ENCODE measurements at regions of chr20 and their contacts with region 1.

Region 1: DNA sequence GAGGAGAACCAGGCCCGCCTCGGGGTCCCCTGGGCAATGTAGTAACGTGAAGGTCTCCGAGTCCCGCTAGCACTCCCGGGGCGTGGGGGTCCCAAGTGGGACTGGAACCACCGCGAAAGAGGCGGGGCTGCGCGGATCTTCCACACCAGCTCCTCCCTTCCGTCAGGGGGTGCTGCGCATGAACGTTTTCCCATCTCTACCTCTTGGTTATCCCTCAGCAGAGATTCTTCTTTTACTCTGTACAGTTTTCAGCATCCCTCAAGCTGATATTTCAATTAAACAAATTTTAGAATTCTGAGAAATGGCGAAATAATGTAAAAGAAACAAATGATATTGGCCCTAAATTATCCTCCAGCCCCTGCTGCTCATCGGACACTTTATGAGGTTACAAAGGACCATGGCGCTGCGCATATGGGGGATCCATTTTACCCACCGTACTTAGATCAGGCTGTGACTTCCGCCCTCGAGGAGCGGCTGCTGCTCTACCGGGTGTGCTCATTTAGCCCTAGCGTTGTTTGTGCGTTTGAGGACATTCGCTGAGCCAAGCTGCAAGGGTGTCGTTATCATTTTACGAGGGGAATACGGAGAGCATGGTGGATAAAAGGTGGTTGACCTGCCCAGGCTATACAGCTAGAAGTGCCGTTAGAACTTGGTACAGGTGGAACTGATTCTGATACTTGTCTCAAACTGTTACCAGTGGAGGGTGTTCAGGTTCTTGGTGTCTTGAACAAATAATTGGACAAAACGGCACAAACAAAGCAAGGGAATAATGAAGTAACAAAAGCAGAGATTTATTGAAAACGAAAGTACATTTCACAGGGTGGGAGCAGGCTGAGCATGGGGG is 75.2 kb upstream of the CHD6 start:
- DNase-seq: peak; percentile 65 to 70
- H3K4me3 ChIP-seq: peak overlapping the region; percentile 74 to 90 (median 80)
- H3K27ac ChIP-seq: peak overlapping the region; percentile 53; the same call in 1 of the 2 replicates
- H3K4me1 ChIP-seq: peaks cover 0 to 6% (median 1%) of the 10 kb centered on the region in 4 experiments; a peak in 1 of 7 replicates
- H3K27me3 ChIP-seq: no peaks in the 10 kb centered on the region
- CTCF ChIP-seq: peak in 2 of 3 experiments; percentile 26 to 44; a peak in 2 of 4 replicates
- EP300 ChIP-seq: peak in 1 of 2 experiments; percentile 65; a peak in 1 of 3 replicates
- POLR2A ChIP-seq: peak in 1 of 2 experiments; percentile 84; a peak in 2 of 3 replicates
- RAD21 ChIP-seq: 0 out of 4 replicates have a peak, but pooled peaks of 1 of the 2 experiments have one; percentile 2

Region 2: DNA sequence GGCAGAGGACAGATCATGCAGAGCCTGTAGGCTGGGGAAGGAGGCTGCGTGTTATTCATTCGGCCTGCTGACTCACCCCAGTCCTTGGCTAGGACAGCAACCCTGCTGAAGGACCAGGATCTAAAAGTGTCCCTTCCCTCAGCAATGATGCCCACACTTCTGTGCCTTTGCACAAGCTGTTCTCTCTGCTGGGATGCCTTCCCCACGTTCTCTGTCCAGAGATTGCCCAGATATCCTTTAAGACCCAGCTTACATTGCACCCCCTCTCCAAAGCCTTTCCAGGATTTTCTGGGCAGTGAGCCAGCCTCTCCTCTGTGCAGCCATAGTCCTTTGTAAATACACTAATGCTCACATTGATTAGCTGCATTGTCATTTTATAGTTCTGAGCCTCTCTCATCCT is 24.1 kb after region 1 on chr20:
- CTCF ChIA-PET with region 1: interaction called, 22 read pairs
- POLR2A ChIA-PET with region 1: interaction called, 3 read pairs
- DNase-seq: no peak
- H3K4me3 ChIP-seq: no peak overlapping the region
- H3K27ac ChIP-seq: no peak overlapping the region
- H3K4me1 ChIP-seq: no peaks in the 10 kb centered on the region
- H3K27me3 ChIP-seq: no peaks in the 10 kb centered on the region
- CTCF ChIP-seq: no peak
- EP300 ChIP-seq: no peak
- POLR2A ChIP-seq: no peak
- RAD21 ChIP-seq: no peak

Region 3: GRCh38 chr20:42309050-42309449 is 615.7 kb after region 1 on chr20:
- CTCF ChIA-PET with region 1: no interaction called
- POLR2A ChIA-PET with region 1: no interaction called
- DNase-seq: no peak
- H3K4me3 ChIP-seq: no peak overlapping the region
- H3K27ac ChIP-seq: no peak overlapping the region
- H3K4me1 ChIP-seq: no peaks in the 10 kb centered on the region
- H3K27me3 ChIP-seq: no peaks in the 10 kb centered on the region
- CTCF ChIP-seq: no peak
- EP300 ChIP-seq: no peak
- POLR2A ChIP-seq: no peak
- RAD21 ChIP-seq: no peak

Measured in H1 (cell line).